Activated CD8-positive, alpha-beta memory T cell treated with anti-CD3 and anti-CD28 coated beads, Interleukin-2, amount 10 ng/mL, durations not matched to agents 7 days and 5 days (primary cell): ENCODE measurements at regions of chrX and their contacts with region 1.

Region 1: GRCh38 chrX:136608295-136609171 is 39.4 kb upstream of the CD40LG start:
- DNase-seq: peak; percentile 70
- ATAC-seq: peak; percentile 80
- H3K4me3 Mint-ChIP-seq: no peak overlapping the region
- H3K27ac Mint-ChIP-seq: peak overlapping the region; percentile 28
- H3K4me1 Mint-ChIP-seq: peaks cover 41% of the 10 kb centered on the region
- H3K27me3 Mint-ChIP-seq: no peaks in the 10 kb centered on the region

Region 2: DNA sequence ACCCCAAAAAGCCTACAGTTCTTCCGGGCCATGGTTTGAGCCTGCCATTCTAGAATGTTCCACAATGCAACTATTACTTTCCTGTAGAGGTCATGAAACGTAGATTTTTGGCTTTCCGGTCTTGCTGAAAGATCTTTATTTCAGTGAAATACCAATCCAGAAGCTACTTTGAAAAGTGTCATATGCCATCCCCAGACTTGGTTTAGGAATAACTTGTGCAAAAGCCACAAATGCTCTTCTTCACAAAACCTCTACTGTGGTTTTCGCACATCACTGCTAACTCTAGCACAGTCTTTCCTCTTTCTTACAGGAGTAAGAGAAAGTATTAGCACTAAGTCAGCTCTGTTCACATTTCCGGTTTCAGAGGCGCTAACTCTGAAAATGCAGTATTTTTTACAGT is 26.7 kb after region 1 on chrX:
- CTCF ChIA-PET with region 1: interaction called, 10 read pairs
- DNase-seq: peak; percentile 60
- ATAC-seq: peak; percentile 76
- H3K4me3 Mint-ChIP-seq: peak overlapping the region; percentile 51
- H3K27ac Mint-ChIP-seq: peak overlapping the region; percentile 89
- H3K4me1 Mint-ChIP-seq: peaks cover 86% of the 10 kb centered on the region
- H3K27me3 Mint-ChIP-seq: no peaks in the 10 kb centered on the region

Region 3: DNA sequence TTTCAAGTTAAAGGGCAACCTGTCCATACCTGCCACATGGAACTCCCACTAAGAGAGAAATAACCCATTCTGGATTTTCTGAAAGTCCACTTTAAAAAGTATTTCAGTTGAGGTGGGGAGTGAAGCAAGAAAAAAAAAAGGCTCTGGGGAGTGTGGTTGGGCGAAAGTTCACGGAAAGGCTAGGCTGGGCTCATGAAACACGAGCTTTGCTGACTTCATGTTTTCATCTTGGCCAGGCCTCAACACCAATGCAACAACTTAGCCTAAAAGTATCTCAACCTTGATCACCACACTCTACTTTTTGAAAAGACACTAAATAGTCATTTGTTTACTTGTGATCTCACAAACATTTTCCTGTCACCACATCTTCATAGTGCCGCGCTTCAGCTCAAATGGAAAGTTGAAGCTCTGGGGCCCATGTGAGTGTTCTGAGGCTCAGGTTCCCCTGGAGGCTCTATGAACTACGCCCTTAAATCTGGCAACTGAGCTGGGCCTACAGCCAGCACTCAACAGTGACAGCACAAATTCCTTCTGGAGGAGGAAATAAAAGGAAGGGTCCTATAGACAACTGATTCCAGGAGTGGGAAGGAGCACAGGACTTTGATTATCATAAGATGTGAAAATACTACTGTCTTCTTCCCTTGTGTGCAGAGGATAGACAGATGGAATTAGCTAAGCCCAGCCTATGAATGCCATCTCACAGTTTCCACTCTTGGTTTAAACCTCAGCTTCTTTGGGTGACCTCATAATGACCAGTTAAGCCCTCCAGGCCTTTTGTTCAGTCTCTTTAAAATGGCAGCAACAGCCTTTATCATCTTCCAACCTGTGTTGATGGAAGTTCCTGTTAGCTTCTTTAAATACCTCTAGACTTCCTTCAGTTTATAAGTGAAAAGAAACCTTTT is 44.5 kb after region 1 on chrX:
- CTCF ChIA-PET with region 1: no interaction called
- DNase-seq: no peak
- ATAC-seq: peak; percentile 55
- H3K4me3 Mint-ChIP-seq: no peak overlapping the region
- H3K27ac Mint-ChIP-seq: peak overlapping the region; percentile 19
- H3K4me1 Mint-ChIP-seq: peaks cover 22% of the 10 kb centered on the region
- H3K27me3 Mint-ChIP-seq: no peaks in the 10 kb centered on the region

Region 4: GRCh38 chrX:136674270-136674985 is 65.9 kb after region 1 on chrX:
- CTCF ChIA-PET with region 1: no interaction called
- DNase-seq: no peak
- ATAC-seq: peak; percentile 63
- H3K4me3 Mint-ChIP-seq: peak overlapping the region; percentile 26
- H3K27ac Mint-ChIP-seq: peak overlapping the region; percentile 92
- H3K4me1 Mint-ChIP-seq: peaks cover 65% of the 10 kb centered on the region
- H3K27me3 Mint-ChIP-seq: no peaks in the 10 kb centered on the region

Region 5: DNA sequence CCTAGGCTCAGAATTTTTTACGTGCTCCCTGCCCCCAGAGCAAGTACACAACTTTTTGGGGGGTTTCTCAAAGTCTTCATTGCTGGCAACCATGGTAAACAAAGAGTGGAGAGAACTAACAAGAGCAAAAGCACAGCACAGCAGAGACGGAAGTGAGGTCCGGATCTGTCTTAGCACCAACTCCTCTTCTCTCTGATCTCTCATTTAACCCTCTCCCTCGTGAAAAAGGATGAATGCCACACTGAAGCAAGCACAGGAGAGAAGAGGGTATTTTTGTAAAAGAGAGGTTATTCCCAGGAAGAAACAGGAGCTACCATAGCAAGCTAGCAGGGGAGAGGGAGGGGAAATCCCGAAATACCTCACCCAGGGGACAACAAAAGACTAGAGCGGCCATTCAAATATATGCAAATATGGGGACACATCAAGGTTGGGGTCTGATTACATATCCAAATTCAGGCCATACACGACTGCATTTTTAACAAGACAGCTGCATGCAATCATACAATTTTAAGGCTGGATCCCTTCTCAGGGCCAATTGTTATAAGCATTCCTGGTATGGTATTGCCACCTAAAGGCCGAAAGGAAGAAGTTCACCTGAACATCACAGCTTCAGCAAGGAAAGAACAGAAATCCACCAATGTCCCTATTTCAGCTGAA is 86.0 kb after region 1 on chrX:
- CTCF ChIA-PET with region 1: interaction called, 57 read pairs
- DNase-seq: no peak
- ATAC-seq: peak; percentile 63
- H3K4me3 Mint-ChIP-seq: peak overlapping the region; percentile 34
- H3K27ac Mint-ChIP-seq: peak overlapping the region; percentile 94
- H3K4me1 Mint-ChIP-seq: peaks cover 76% of the 10 kb centered on the region
- H3K27me3 Mint-ChIP-seq: no peaks in the 10 kb centered on the region

Region 6: GRCh38 chrX:136747003-136747986 is 138.8 kb after region 1 on chrX:
- CTCF ChIA-PET with region 1: no interaction called
- DNase-seq: peak; percentile 49
- ATAC-seq: peak; percentile 81
- H3K4me3 Mint-ChIP-seq: no peak overlapping the region
- H3K27ac Mint-ChIP-seq: peak overlapping the region; percentile 83
- H3K4me1 Mint-ChIP-seq: peaks cover 77% of the 10 kb centered on the region
- H3K27me3 Mint-ChIP-seq: no peaks in the 10 kb centered on the region